Activated naive CD4-positive, alpha-beta T cell treated with anti-CD3 and anti-CD28 coated beads for 36 hours (primary cell): ENCODE measurements at regions of chr6 and their contacts with region 1.

Region 1: DNA sequence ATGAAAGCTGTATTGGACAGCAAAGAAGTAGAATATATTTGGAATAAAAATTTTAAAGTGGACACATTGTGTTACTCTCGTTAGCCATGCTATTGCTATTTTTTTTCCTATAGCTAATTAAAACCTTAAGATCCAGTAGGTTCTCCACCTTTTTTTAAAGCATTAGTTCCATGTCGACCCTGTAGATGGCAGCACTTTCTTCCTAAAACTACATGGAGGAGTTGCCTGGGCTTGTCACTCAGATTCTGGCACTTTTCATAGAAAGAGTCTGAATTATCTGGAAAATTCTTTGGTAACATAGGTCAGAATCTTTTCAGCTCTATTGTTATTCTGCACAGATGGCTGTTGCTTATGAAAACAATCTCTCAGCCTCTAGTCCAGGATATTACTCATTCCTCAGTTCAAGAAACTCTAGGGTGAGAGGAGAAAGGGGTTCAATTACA is 42.0 kb upstream of the ESR1 start:
- DNase-seq: peak; percentile 73
- H3K4me3 Mint-ChIP-seq: no peak overlapping the region
- H3K27ac Mint-ChIP-seq: no peak overlapping the region
- H3K4me1 Mint-ChIP-seq: peaks cover 11% of the 10 kb centered on the region
- H3K27me3 Mint-ChIP-seq: peaks cover 4% of the 10 kb centered on the region

Region 2: DNA sequence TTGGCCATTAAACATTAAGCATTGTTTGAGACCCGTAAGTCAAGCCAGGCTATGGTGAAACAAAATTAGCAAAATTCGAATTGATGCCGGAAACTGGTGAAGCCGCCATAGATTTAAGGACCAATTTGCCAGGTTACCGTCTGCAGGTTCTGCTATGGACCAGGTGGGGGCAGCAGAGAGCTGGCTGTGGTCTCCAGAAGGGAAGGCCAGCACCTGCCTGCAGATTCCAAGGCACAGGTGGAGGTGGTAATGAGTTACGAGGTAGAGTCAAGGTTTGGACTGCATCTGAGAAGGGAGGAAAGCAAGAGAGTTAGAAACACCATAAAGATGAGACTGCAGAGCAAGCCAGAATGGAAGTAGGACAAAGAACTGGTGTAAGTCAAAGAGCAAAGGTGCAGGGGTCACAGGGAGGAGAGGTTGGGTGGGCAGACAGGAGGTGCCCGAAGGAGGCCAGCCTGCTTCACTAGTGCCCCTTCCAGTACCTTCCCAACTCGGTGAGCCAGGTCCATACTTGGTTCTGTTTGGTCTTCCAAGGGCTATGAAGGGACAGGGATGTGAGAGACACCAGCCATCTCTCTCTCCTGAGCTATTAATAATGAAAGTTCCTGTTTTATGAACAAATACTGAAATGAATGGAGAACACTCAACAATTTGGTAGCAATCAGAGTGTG is 89.6 kb before region 1 on chr6:
- CTCF ChIA-PET with region 1: interaction called, 9 read pairs
- intact Hi-C with region 1: loop called (anchors 1 kb)
- DNase-seq: peak; percentile 69
- H3K4me3 Mint-ChIP-seq: no peak overlapping the region
- H3K27ac Mint-ChIP-seq: no peak overlapping the region
- H3K4me1 Mint-ChIP-seq: peaks cover 8% of the 10 kb centered on the region
- H3K27me3 Mint-ChIP-seq: no peaks in the 10 kb centered on the region

Region 3: GRCh38 chr6:151807533-151808370 is 42.3 kb after region 1 on chr6 and contains the start of gene ESR1:
- CTCF ChIA-PET with region 1: interaction called, 6 read pairs
- intact Hi-C with region 1: loop called (anchors 2 kb)
- DNase-seq: peak; percentile 26
- H3K4me3 Mint-ChIP-seq: peak within 1 kb of the TSS; percentile 69
- H3K27ac Mint-ChIP-seq: no peak within 1 kb of the TSS
- H3K4me1 Mint-ChIP-seq: peaks cover 13% of the 10 kb centered on the region
- H3K27me3 Mint-ChIP-seq: peaks cover 43% of the 10 kb centered on the region
- total RNA-seq, gene ESR1: 0.52 to 0.54 TPM

Region 4: DNA sequence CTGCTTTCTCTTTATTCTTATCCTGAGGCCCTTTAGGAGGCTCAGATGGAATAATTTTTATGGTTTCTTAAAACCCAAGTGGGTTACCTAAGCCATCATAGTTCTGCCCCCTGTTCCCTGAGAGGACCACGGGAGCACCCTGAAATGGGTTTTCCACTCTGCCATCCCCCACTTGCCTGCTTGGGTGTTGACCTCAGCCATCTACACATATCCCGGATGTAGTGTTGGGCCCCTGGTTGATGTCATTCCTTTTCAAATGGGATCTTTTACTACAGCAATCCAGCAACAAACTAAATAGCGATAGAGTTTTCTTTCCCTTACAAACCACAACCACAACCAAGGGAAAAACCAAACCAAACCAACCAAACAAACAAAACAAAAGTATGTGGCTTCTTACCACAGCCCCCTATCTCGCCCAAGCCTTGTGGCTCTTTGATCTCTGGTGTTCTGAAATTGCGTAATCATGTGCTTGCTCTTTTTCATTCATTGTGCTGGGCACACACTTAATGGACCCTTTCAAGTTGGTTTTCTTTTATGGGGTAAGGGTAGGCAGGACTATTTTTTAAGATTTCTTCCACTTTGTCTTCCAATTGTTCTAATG is 196.9 kb after region 1 on chr6:
- CTCF ChIA-PET with region 1: no interaction called
- intact Hi-C with region 1: loop called (anchors 5 kb)
- DNase-seq: peak; percentile 18
- H3K4me3 Mint-ChIP-seq: no peak overlapping the region
- H3K27ac Mint-ChIP-seq: no peak overlapping the region
- H3K4me1 Mint-ChIP-seq: peaks cover 16% of the 10 kb centered on the region
- H3K27me3 Mint-ChIP-seq: peaks cover 10% of the 10 kb centered on the region

Region 5: DNA sequence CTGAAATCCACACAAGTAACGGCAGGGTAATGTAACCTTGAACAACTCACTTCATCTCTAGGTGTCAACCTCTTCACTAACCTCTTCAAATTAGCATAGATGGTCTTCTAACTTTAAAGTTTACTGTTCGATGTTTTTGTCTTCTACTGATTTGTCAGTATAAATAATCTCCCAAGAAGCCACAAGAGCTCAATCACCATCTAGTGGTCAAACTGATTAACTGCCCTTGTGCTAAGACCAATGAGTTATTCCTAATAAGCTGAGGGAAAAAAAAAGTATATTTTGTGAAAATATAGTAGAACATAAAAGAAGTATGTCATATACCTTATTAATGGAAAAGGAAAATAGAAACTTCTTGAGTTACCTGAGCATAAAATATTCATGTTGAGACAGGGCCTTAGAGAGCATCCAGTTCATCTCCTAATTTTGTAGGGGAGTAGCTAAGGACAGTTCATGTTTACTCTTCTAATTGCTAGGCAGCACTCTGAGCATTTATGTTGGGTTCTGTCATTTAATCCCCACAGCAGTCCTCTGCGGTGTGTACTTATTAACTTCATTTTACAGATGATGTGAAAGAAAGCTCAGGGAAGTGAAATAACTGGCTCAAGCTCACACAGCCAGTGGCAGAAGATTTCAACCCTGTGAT is 359.1 kb after region 1 on chr6:
- CTCF ChIA-PET with region 1: interaction called, 18 read pairs
- intact Hi-C with region 1: loop called (anchors 1 kb)
- DNase-seq: no peak
- H3K4me3 Mint-ChIP-seq: no peak overlapping the region
- H3K27ac Mint-ChIP-seq: peak overlapping the region; percentile 39
- H3K4me1 Mint-ChIP-seq: no peaks in the 10 kb centered on the region
- H3K27me3 Mint-ChIP-seq: no peaks in the 10 kb centered on the region

Region 6: DNA sequence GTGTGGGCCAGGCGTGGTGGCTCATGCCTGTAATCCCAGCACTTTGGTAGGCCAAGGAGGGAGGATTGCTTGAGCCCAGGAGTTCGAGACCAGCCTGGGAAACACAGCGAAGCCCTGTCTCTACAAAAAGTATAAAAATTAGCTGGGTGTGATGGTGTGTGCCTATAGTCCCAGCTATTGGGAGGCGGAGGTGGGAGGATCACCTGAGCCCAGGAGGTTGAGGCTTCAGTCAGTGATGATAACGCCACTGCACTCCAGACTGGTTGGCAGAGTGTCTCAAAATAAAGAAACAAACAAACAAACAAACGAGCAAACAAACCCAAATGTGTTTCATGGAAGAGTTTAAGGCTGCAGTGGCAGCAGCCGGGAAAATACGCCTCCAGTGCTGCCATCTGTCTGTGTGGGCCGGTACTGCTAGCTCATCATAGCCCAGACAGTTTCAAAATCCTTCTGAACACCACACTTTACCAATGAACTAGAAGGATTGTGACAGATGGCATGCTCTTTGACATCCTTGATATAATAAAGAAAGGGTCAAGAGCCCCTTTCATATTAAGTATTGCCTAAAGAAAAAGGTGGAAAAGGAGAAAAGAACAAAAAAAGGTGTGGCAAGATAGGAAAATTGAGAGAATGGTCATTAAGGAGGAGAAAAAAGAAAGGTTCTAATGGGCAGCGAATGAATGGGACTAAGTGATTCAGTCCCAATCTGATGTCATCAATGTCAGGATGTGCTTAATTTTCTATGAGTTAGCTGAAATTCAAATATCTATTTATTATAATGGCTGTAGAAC is 573.1 kb after region 1 on chr6:
- CTCF ChIA-PET with region 1: interaction called, 3 read pairs
- intact Hi-C with region 1: loop called (anchors 1 kb)
- DNase-seq: peak; percentile 69
- H3K4me3 Mint-ChIP-seq: no peak overlapping the region
- H3K27ac Mint-ChIP-seq: no peak overlapping the region
- H3K4me1 Mint-ChIP-seq: no peaks in the 10 kb centered on the region
- H3K27me3 Mint-ChIP-seq: no peaks in the 10 kb centered on the region

Region 7: GRCh38 chr6:152356451-152357061 is 591.1 kb after region 1 on chr6:
- CTCF ChIA-PET with region 1: no interaction called
- intact Hi-C with region 1: loop called (anchors 1 kb)
- DNase-seq: peak; percentile 16
- H3K4me3 Mint-ChIP-seq: no peak overlapping the region
- H3K27ac Mint-ChIP-seq: no peak overlapping the region
- H3K4me1 Mint-ChIP-seq: peaks cover 2% of the 10 kb centered on the region
- H3K27me3 Mint-ChIP-seq: no peaks in the 10 kb centered on the region